ENCODE measurements at regions of chr16 and their contacts with region 1.

Region 1: DNA sequence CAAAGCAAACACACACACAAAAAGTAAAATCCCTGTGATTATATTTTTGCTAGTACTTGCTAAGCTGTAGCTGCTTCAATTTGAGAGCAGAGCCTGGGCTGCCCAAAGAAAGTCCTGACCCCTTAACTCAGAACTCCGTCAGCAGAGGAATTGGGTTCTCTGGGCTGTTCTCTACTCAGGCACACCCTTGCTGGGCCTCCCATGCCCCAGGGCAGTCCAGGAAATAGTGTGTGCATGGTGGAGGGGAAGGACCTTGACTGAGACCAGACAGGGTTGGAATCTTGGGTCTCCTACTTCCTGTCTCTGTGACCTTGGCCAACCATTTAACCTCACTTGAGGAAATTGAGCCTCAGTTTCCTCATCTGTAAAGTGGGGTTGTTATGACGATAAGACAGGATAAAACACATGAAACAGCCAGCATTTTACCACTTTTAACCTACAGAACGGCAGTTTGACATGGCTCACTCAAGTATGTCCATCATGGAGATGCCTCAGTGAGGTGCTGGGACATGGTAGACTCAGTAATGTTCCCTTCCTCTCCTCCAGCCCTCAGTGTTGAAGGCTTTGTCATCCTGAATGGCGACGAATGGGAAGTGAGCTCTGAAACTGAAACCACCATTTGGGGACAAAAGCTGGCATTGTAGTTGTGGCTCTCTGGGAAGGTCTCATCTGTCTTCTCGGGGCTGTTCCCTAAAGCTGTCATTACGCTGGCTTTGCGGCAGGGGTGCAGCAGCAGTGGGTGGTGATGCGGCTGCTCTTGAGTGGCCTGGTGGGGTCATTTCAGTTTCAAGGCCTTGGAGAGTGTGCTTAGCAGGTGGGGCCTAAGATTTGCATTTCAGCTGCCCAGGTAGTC is 74.9 kb downstream of the CMIP start:
- DNase-seq: no peak
- H3K4me3 ChIP-seq: no peak overlapping the region
- H3K27ac ChIP-seq: peak overlapping the region; percentile 97
- H3K4me1 ChIP-seq: peaks cover 39% of the 10 kb centered on the region
- H3K27me3 ChIP-seq: no peaks in the 10 kb centered on the region
- CTCF ChIP-seq: no peak
- POLR2A ChIP-seq: no peak

Region 2: DNA sequence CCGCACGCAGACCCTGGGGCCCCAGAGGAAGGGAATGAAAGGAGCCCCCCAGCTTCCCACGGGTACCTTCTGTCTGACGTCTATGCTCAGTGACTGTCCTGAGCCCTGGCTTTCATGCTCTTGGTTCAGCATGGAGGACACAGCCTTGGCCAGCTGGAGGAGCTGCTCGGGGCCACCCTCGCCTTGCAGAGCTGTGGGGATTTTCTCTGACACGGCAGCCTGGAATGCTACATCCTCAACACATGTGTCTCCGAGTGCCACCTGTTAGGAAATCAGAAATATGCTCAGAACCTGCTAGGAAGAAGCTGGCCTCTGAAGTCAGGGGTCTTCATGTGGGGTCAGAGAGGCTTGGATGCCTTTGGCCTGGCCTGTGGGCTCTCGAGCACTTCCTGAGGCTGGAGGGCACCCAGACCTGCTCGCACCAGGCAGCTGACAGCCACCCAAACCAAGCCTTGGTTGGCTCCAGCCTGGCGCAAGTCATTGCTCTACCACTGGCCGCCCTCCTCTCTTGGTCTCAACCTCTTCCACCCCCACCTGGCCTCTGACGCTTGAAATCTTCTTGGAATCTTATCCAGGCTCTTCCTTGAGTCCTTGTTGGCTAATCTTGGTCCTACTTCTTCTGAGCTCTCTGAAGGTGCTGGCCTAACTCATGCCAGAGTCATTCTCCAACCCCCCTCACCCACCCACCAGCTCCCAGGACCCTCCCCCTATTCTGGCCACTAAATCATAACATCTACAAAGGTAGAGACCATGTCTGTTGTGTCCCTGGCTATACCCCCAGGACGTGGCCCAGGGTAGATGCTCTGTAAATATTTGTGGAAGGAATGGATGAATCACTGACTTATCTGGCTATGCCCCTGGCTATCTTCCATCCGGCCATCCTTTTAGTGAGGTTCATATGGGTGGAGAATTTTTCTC is 344.6 kb before region 1 on chr16:
- CTCF ChIA-PET with region 1: no interaction called
- POLR2A ChIA-PET with region 1: no interaction called
- dilution Hi-C with region 1: no loop called
- intact Hi-C with region 1: no loop called
- DNase-seq: no peak
- H3K4me3 ChIP-seq: no peak overlapping the region
- H3K27ac ChIP-seq: no peak overlapping the region
- H3K4me1 ChIP-seq: no peaks in the 10 kb centered on the region
- H3K27me3 ChIP-seq: no peaks in the 10 kb centered on the region
- CTCF ChIP-seq: no peak
- POLR2A ChIP-seq: no peak

Region 3: GRCh38 chr16:81469710-81470535 is 49.6 kb before region 1 on chr16:
- CTCF ChIA-PET with region 1: no interaction called
- POLR2A ChIA-PET with region 1: no interaction called
- dilution Hi-C with region 1: no loop called
- intact Hi-C with region 1: loop called (anchors 1 kb)
- DNase-seq: no peak
- H3K4me3 ChIP-seq: no peak overlapping the region
- H3K27ac ChIP-seq: no peak overlapping the region
- H3K4me1 ChIP-seq: peaks cover 22% of the 10 kb centered on the region
- H3K27me3 ChIP-seq: no peaks in the 10 kb centered on the region
- CTCF ChIP-seq: no peak
- POLR2A ChIP-seq: no peak

Region 4: GRCh38 chr16:81544664-81545271 is 25.2 kb after region 1 on chr16:
- CTCF ChIA-PET with region 1: interaction called, 3 read pairs
- POLR2A ChIA-PET with region 1: interaction called, 3 read pairs
- dilution Hi-C with region 1: no loop called
- intact Hi-C with region 1: loop called (anchors 1 kb)
- DNase-seq: no peak
- H3K4me3 ChIP-seq: no peak overlapping the region
- H3K27ac ChIP-seq: no peak overlapping the region
- H3K4me1 ChIP-seq: peaks cover 31% of the 10 kb centered on the region
- H3K27me3 ChIP-seq: no peaks in the 10 kb centered on the region
- CTCF ChIP-seq: no peak
- POLR2A ChIP-seq: no peak

Region 5: DNA sequence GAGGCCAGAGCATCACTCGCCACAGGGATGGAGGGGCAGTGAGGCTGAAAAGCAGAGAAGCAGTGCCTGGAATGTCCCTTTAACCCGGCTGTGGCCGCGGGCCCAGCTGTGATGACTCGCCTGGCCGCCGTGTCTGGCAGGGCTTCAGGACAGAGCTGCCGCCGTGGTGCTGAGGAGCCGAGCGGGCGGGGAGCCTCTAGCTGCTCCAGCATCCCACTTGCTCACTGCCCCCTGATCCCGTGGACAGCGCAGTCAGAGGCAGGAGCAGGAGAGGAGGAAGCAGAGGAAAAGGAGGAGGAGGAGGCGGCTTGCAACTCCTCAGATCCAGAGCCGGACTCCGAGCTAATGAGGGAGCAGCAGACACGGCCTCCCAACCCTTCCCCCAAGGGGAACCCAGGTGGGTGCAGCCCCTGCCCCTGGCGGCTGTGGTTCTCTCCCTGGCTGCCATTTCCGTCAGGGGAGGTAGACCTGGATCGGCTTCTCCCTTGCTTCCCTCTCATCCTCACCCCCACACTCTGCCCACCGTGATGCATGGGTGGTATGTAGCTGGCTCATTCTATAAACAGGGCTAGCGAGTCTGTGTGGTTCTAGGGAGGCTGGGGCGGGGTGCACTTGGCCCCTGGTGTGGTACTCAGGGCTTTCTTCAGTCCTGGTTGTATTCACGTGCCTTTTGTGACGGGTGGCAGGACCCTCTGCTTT is 90.8 kb after region 1 on chr16:
- CTCF ChIA-PET with region 1: no interaction called
- POLR2A ChIA-PET with region 1: no interaction called
- dilution Hi-C with region 1: no loop called
- intact Hi-C with region 1: loop called (anchors 2 kb)
- DNase-seq: peak; percentile 77
- H3K4me3 ChIP-seq: peak overlapping the region in 1 of 3 experiments; percentile 18
- H3K27ac ChIP-seq: peak overlapping the region; percentile 49
- H3K4me1 ChIP-seq: peaks cover 46% of the 10 kb centered on the region
- H3K27me3 ChIP-seq: no peaks in the 10 kb centered on the region
- CTCF ChIP-seq: no peak
- POLR2A ChIP-seq: no peak